ENCODE measurements at regions of chr18 and their contacts with region 1.

Region 1: DNA sequence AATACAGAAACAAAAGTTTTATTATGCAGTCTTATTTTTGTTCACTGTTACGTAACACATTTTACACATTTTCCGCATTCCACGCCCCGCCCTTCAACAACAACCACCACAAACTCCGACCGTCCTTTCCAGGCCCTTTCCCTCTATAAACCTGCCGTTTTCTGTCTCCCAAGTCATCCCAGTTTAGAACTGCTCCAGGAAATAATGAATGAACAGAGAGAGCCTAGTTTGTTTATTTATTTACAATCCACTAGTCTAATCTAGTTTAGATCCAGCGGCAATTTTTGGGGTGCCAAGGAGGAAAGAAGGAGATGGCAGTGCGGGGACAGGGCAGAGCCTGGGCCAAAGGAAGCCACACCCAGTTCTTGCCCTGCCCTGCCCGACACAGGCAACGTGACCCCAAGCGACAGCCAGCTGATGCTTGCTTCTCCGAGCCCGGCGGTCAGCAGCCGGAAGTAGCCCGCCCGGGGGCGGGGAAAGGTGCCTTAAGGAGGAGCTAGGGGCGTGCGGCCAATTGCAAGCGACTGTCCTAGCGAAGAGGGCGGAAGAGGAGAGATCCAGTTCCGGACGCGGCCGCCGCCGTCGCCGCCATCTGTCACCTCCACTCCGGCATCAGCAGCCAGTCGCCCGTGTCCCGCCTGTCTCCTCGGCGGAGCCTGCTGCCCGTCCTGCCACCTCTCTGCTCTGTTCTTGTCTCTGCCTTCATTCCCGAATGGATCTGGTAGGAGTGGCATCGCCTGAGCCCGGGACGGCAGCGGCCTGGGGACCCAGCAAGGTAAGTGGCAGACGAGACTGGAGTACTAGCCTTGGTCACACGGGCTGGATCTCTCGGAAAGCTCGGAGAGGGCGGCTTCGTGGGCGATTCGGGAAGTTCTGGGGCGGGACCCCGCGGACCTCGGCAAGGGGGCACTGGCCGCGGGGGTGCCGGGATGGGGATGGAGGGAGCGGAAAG is at the start of gene RIOK3:
- DNase-seq: peak; percentile 94
- ATAC-seq: peak; percentile 99
- H3K4me3 ChIP-seq: peak within 1 kb of the TSS; percentile 89 to 98 (median 95)
- H3K27ac ChIP-seq: peak within 1 kb of the TSS; percentile 60
- H3K4me1 ChIP-seq: peaks cover 38% of the 10 kb centered on the region
- H3K27me3 ChIP-seq: no peaks in the 10 kb centered on the region; a peak in 2 of 5 replicates
- CTCF ChIP-seq: no peak
- EP300 ChIP-seq: no peak
- POLR2A ChIP-seq: peak; percentile 64 to 87
- RAD21 ChIP-seq: no peak
- total RNA-seq, gene RIOK3: 36.0 and 39.6 TPM in 2 replicates

Region 2: GRCh38 chr18:23437357-23438045 is 15.5 kb before region 1 on chr18:
- CTCF ChIA-PET with region 1: no interaction called
- POLR2A ChIA-PET with region 1: interaction called, 15 read pairs
- in situ Hi-C with region 1: no loop called
- intact Hi-C with region 1: loop called (anchors 2 kb)
- DNase-seq: peak; percentile 39
- ATAC-seq: peak; percentile 96
- H3K4me3 ChIP-seq: peak overlapping the region; percentile 66 to 88 (median 75)
- H3K27ac ChIP-seq: peak overlapping the region; percentile 36
- H3K4me1 ChIP-seq: peaks cover 17% of the 10 kb centered on the region
- H3K27me3 ChIP-seq: no peaks in the 10 kb centered on the region; a peak in 1 of 5 replicates
- CTCF ChIP-seq: no peak
- EP300 ChIP-seq: no peak
- POLR2A ChIP-seq: peak; percentile 26 to 81; a peak in 3 of 4 replicates
- RAD21 ChIP-seq: no peak

Region 3: DNA sequence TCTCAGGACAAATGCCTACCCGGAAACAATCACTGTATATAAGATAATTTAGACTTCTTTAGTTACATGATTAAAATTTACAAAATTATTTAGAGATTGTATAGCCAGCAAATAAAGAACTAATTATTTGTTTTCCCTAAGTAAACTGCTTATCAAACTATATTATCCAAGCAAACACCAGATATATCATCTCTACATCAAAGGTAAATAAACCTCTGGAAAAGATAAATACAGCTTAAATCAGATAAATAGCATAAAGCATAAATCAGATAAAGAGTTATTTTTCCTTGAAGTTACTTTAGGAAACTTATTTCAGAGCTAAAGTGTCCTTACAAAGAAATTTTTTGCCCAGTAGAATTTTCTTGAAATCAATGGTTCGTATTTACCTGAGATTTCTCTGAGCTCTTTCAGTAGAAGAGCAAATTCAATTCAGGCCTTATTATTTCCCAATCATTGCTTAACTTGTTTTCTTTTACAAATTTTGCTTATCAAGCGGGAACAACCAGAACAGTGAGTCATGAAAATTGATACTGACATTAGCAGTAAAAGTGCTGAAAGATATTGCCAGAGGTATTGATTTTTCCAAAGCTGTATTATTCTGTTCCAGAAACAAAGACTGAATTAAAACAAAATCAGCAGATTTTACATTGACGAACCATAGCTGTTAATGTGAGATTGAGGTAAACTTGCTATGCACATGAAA is 10.2 kb before region 1 on chr18:
- CTCF ChIA-PET with region 1: no interaction called
- POLR2A ChIA-PET with region 1: interaction called, 15 read pairs
- in situ Hi-C with region 1: no loop called
- intact Hi-C with region 1: loop called (anchors 2 kb)
- DNase-seq: no peak
- ATAC-seq: no peak
- H3K4me3 ChIP-seq: no peak overlapping the region
- H3K27ac ChIP-seq: no peak overlapping the region
- H3K4me1 ChIP-seq: peaks cover 12% of the 10 kb centered on the region
- H3K27me3 ChIP-seq: peaks cover 0 to 7% of the 10 kb centered on the region in 2 experiments; a peak in 1 of 5 replicates
- CTCF ChIP-seq: no peak
- EP300 ChIP-seq: no peak
- POLR2A ChIP-seq: no peak
- RAD21 ChIP-seq: no peak

Measured in HepG2 (cell line).